ENCODE measurements at regions of chr19 and their contacts with region 1.

Region 1: GRCh38 chr19:43784981-43785808 is 4.4 kb upstream of the KCNN4 start:
- DNase-seq: no peak
- H3K4me3 ChIP-seq: peak overlapping the region in 1 of 4 donors; percentile 36
- H3K27ac ChIP-seq: peak overlapping the region; percentile 59 to 79 (median 70)
- H3K4me1 ChIP-seq: peaks cover 25 to 54% (median 30%) of the 10 kb centered on the region in 3 donors
- H3K27me3 ChIP-seq: peaks cover 0 to 10% (median 0%) of the 10 kb centered on the region in 4 donors
- CTCF ChIP-seq: peak; percentile 95 to 99 (median 98)
- POLR2A ChIP-seq: no peak

Region 2: GRCh38 chr19:43675269-43675879 is 109.8 kb before region 1 on chr19:
- intact Hi-C with region 1: loop called (anchors 10 kb)
- DNase-seq: no peak
- H3K4me3 ChIP-seq: peak overlapping the region in 1 of 4 donors; percentile 20
- H3K27ac ChIP-seq: peak overlapping the region; percentile 67 to 94 (median 86)
- H3K4me1 ChIP-seq: peaks cover 0 to 17% (median 7%) of the 10 kb centered on the region in 3 donors
- H3K27me3 ChIP-seq: no peaks in the 10 kb centered on the region
- CTCF ChIP-seq: no peak
- POLR2A ChIP-seq: peak in 1 of 4 donors; percentile 57

Region 3: DNA sequence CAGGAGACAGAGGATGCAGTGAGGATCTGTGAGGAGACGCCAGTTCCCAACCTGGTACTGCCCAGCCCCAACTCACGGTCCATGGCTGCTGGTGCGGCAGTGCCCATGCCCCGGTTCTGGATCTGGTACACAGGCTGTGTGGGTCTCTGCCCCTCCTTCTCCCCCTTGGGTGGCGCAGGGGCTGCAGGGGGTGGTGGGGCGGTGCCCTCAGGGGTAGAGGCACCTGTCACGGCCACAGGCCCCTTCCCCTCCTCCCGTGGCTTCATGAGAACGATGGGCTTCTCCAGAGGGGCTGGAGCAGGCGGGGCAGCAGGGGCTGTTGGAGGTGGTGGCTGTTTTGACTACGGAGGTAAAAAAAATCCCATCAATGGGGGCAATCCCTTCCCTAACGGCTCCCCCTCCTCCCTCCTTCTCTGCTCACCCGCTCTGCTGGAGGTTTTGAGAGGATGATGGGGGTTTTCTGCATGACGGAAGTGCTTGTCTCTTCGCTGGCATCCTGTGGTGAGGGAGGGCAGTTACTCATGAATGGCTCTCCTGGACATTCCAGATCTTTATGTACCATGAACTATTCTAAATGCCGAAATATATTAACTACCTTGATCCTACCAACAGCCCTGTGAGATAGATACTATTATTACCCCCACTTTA is 37.5 kb before region 1 on chr19:
- intact Hi-C with region 1: loop called (anchors 5 kb)
- DNase-seq: no peak
- H3K4me3 ChIP-seq: no peak overlapping the region
- H3K27ac ChIP-seq: no peak overlapping the region
- H3K4me1 ChIP-seq: peaks cover 11 to 49% (median 15%) of the 10 kb centered on the region in 3 donors
- H3K27me3 ChIP-seq: no peaks in the 10 kb centered on the region
- CTCF ChIP-seq: no peak
- POLR2A ChIP-seq: no peak

Region 4: DNA sequence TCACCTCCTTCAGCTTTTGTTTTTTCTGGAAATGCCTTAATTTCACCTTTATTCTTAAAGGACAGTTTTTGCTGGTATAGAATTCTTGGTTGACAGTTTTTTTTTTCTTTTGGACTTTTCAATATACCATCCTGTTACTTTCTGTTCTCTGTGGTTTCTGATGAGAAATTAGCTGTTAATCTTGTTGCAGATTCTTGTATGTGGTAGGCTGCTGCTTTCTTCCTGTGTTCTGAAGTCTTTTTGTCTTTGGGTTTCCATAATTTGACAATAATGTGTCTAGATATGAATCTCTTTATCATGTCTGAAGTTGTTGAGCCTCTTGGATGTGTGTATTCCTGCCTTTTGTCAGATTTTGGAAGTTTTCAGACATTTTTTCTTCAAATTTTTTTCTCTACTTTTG is 53.9 kb after region 1 on chr19:
- intact Hi-C with region 1: no loop called
- DNase-seq: no peak
- H3K4me3 ChIP-seq: no peak overlapping the region
- H3K27ac ChIP-seq: no peak overlapping the region
- H3K4me1 ChIP-seq: no peaks in the 10 kb centered on the region
- H3K27me3 ChIP-seq: no peaks in the 10 kb centered on the region
- CTCF ChIP-seq: no peak
- POLR2A ChIP-seq: no peak